Heart left ventricle (tissue), 16 donors: ENCODE measurements at regions of chr6 and their contacts with region 1.

Region 1: DNA sequence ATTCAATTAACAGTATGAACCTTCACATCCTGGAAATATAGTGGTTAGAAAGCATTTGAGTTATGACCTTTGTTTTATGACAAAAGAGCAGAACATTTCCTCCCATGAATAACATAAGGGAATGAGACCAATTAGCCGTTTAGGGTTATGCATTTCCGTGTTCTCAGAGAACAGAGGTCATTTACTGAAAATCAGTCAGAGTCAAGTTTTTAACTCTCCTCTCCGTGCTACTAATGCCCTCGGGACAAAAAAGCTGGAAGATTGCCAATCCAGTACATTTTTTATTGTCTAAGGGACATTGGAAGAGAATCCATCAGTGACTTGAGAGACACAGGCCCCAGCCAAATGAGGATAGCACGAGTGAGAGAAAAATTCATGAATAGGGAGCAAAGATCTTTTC is 632.7 kb downstream of the RFPL4B start:
- DNase-seq: peak in 3 of 5 donors; percentile 33 to 59 (median 53)
- ATAC-seq: peak; percentile 56 to 90 (median 78)
- H3K4me3 ChIP-seq: no peak overlapping the region
- H3K27ac ChIP-seq: peak overlapping the region in 6 of 12 donors; percentile 2 to 48 (median 33)
- H3K4me1 ChIP-seq: peaks cover 0 to 12% (median 0%) of the 10 kb centered on the region in 12 donors
- H3K27me3 ChIP-seq: no peaks in the 10 kb centered on the region
- CTCF ChIP-seq: no peak
- POLR2A ChIP-seq: no peak

Region 2: GRCh38 chr6:112939563-112939962 is 40.3 kb before region 1 on chr6:
- intact Hi-C with region 1: loop called in 1 of 10 experiments (anchors 5 kb)
- DNase-seq: no peak
- ATAC-seq: no peak
- H3K4me3 ChIP-seq: no peak overlapping the region
- H3K27ac ChIP-seq: no peak overlapping the region
- H3K4me1 ChIP-seq: peaks cover 0 to 23% (median 2%) of the 10 kb centered on the region in 12 donors
- H3K27me3 ChIP-seq: no peaks in the 10 kb centered on the region
- CTCF ChIP-seq: no peak
- POLR2A ChIP-seq: no peak

Region 3: GRCh38 chr6:113065611-113066010 is 85.8 kb after region 1 on chr6:
- intact Hi-C with region 1: loop called in 1 of 10 experiments (anchors 10 kb)
- DNase-seq: peak in 1 of 5 donors; percentile 15
- ATAC-seq: peak; percentile 51 to 81 (median 78)
- H3K4me3 ChIP-seq: no peak overlapping the region
- H3K27ac ChIP-seq: peak overlapping the region in 8 of 12 donors; percentile 2 to 48 (median 33)
- H3K4me1 ChIP-seq: peaks cover 0 to 36% (median 1%) of the 10 kb centered on the region in 12 donors
- H3K27me3 ChIP-seq: no peaks in the 10 kb centered on the region
- CTCF ChIP-seq: no peak
- POLR2A ChIP-seq: no peak